WTC11 (cell line): ENCODE measurements at regions of chr19 and their contacts with region 1.

Region 1: DNA sequence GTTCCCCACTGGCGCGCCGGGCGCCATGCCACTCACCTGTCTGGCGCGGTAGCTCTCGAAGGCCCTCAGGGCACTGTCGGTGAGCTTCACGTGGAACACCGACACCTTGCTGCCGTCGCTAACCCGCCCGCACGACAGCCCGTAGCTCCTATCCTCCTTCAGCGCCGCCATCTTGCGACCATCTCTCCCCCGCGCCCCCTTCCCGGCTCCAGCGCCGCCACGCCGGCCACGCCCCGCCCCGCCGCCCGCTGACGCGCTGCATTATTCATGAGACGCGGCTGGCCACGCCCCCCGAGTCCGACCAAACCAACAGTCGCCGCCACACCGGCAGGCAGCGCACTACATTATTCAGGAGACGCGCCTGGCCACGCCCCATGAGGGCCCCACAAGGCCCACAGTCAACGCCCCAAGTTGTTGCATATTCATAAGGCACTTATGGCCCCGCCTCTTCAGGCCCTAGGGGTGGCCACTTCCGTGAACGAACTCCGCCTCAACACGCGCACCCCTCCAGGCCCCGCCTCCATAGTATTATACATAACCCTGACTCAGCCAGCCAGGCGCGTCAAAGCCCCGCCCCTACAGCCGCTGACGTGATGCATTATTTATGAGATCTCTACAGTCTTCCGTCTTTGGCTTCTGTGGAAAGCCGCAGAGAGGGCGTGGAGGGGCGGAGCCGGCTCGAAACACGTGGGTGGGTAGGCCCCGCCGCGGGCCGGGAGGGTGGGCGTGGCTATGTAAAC is at the start of gene ELL:
- DNase-seq: peak; percentile 100
- ATAC-seq: peak; percentile 95
- H3K4me3 Mint-ChIP-seq: peak within 1 kb of the TSS; percentile 81
- H3K27ac Mint-ChIP-seq: peak within 1 kb of the TSS; percentile 87
- H3K4me1 Mint-ChIP-seq: peaks cover 7% of the 10 kb centered on the region
- H3K27me3 Mint-ChIP-seq: no peaks in the 10 kb centered on the region
- CTCF ChIP-seq: no peak
- total RNA-seq, gene ELL: 11.6 to 17.3 TPM (median 13.1 TPM) in 3 replicates

Region 2: GRCh38 chr19:18503971-18504885 is 17.8 kb before region 1 on chr19:
- CTCF ChIA-PET with region 1: interaction called, 55 read pairs
- POLR2A ChIA-PET with region 1: interaction called, 3 read pairs
- DNase-seq: no peak
- ATAC-seq: peak; percentile 68
- H3K4me3 Mint-ChIP-seq: no peak overlapping the region
- H3K27ac Mint-ChIP-seq: peak overlapping the region; percentile 73; the same call in 1 of the 2 replicates
- H3K4me1 Mint-ChIP-seq: peaks cover 13% of the 10 kb centered on the region
- H3K27me3 Mint-ChIP-seq: no peaks in the 10 kb centered on the region
- CTCF ChIP-seq: no peak

Region 3: GRCh38 chr19:18571564-18572300 is 49.7 kb after region 1 on chr19 and contains the start of gene UBA52:
- CTCF ChIA-PET with region 1: interaction called, 11 read pairs
- POLR2A ChIA-PET with region 1: interaction called, 3 read pairs
- DNase-seq: peak; percentile 99
- ATAC-seq: peak; percentile 92
- H3K4me3 Mint-ChIP-seq: peak within 1 kb of the TSS; percentile 76
- H3K27ac Mint-ChIP-seq: peak within 1 kb of the TSS; percentile 98
- H3K4me1 Mint-ChIP-seq: peaks cover 16% of the 10 kb centered on the region
- H3K27me3 Mint-ChIP-seq: no peaks in the 10 kb centered on the region
- CTCF ChIP-seq: no peak
- total RNA-seq, gene UBA52: 1,300 to 1,361 TPM (median 1,328 TPM) in 3 replicates

Region 4: GRCh38 chr19:18594096-18594823 is 72.2 kb after region 1 on chr19:
- CTCF ChIA-PET with region 1: interaction called, 36 read pairs
- POLR2A ChIA-PET with region 1: interaction called, 4 read pairs
- DNase-seq: peak; percentile 82
- ATAC-seq: peak; percentile 34
- H3K4me3 Mint-ChIP-seq: peak overlapping the region; percentile 77
- H3K27ac Mint-ChIP-seq: peak overlapping the region; percentile 94
- H3K4me1 Mint-ChIP-seq: peaks cover 53% of the 10 kb centered on the region
- H3K27me3 Mint-ChIP-seq: peaks cover 4% of the 10 kb centered on the region
- CTCF ChIP-seq: peak; percentile 63